ENCODE measurements at regions of chr7 and their contacts with region 1.

Region 1: DNA sequence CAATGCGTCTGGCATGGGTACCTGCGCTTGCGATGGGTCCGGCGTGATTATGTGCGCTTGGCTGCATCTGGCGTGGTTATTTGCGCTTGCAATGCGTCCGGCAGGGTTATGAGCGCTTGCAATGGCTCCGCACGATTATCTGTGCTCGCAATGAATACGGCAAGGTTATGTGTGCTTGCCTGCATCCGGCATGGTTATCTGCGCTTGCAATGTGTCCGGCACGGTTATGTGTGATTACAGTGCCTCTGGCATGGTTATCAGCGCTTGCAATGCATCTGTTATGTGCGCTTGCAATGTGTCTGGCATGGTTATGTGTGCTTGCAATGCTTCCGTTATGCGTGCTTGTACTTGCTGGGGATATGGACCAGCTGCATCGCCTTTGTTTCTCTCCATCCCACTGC is 37.7 kb downstream of the RBAK start:
- DNase-seq: no peak
- H3K4me3 Mint-ChIP-seq: no peak overlapping the region
- H3K27ac Mint-ChIP-seq: no peak overlapping the region
- H3K4me1 Mint-ChIP-seq: peaks cover under 1% of the 10 kb centered on the region
- H3K27me3 Mint-ChIP-seq: peaks cover 63% of the 10 kb centered on the region
- CTCF ChIP-seq: no peak

Region 2: GRCh38 chr7:4797858-4798705 is 285.2 kb before region 1 on chr7:
- CTCF ChIA-PET with region 1: interaction called, 3 read pairs
- intact Hi-C with region 1: loop called (anchors 2 kb)
- DNase-seq: peak; percentile 77
- H3K4me3 Mint-ChIP-seq: no peak overlapping the region
- H3K27ac Mint-ChIP-seq: no peak overlapping the region
- H3K4me1 Mint-ChIP-seq: no peaks in the 10 kb centered on the region
- H3K27me3 Mint-ChIP-seq: no peaks in the 10 kb centered on the region
- CTCF ChIP-seq: peak; percentile 98

Region 3: GRCh38 chr7:4849369-4849768 is 233.9 kb before region 1 on chr7:
- CTCF ChIA-PET with region 1: interaction called, 3 read pairs
- intact Hi-C with region 1: loop called (anchors 1 kb)
- DNase-seq: peak; percentile 55
- H3K4me3 Mint-ChIP-seq: no peak overlapping the region
- H3K27ac Mint-ChIP-seq: no peak overlapping the region
- H3K4me1 Mint-ChIP-seq: no peaks in the 10 kb centered on the region
- H3K27me3 Mint-ChIP-seq: peaks cover 17% of the 10 kb centered on the region
- CTCF ChIP-seq: peak; percentile 48

Measured in Calu3 (cell line).